OCI-LY7 (cell line): ENCODE measurements at regions of chr18 and their contacts with region 1.

Region 1: DNA sequence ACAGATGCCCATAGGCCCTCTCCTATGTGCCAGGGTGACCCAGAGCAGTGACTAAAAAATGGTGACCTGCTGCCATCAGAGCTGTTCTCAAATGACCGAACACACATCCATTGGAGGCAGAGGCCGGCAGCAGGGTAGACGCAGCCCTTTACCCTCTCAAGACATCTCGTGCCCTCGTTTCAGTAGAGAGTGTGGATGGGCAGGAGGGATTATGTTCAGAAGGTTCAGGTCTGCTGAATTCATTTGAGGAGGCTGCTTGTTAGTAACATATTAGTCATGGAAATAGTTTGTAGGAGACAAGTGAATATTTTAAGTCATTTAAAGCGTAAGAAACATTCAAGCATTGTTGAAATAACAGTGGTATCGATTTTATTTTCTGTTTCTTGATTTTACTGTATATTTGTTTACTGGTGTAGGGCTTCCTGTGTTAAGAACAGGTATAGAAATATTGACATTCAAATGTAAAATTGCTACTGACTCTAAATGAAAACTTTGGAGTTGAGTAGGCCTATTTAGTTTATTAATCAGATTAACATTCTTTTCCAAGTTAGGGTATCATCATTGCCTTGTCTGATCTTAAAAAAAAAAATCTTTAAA is 82.6 kb downstream of the ZNF532 start:
- DNase-seq: no peak
- H3K4me3 ChIP-seq: peak overlapping the region; percentile 42
- H3K27ac ChIP-seq: peak overlapping the region; percentile 99
- H3K4me1 ChIP-seq: peaks cover 70% of the 10 kb centered on the region
- CTCF ChIP-seq: no peak

Region 2: DNA sequence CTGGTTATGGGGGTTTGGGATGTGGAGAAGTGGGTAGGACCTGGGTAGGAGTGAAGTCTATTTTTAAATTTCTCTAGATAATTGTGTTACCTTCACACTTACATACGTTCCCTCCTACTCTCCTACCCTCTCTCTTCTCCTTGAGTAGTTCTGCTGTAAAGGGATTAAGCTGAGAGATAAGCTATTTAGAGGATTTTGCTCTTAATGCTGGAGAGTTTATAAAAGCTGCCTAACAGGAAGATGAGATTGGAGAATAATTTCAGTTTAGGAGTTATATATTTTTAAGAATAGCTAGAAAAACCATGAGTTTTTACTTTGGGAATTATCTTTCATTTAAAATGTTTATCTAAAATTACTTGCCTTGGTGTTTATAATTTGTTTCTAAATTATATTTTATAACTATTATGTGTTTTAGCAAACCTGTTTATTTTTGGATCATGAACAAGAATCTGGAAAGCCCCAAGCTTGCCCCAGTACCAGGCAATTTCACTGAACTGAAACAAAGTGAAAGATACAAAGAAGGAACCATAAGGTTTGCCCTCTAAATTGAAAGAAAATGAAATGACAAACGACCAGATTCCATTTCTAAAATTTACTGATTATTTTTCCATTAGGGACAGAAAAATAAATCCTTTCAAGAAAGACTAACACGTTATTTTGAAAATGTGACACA is 18.9 kb after region 1 on chr18:
- CTCF ChIA-PET with region 1: no interaction called
- POLR2A ChIA-PET with region 1: interaction called, 8 read pairs
- intact Hi-C with region 1: loop called (anchors 1 kb)
- DNase-seq: peak; percentile 24
- H3K4me3 ChIP-seq: peak overlapping the region; percentile 54
- H3K27ac ChIP-seq: peak overlapping the region; percentile 83
- H3K4me1 ChIP-seq: peaks cover 64% of the 10 kb centered on the region
- CTCF ChIP-seq: no peak

Region 3: DNA sequence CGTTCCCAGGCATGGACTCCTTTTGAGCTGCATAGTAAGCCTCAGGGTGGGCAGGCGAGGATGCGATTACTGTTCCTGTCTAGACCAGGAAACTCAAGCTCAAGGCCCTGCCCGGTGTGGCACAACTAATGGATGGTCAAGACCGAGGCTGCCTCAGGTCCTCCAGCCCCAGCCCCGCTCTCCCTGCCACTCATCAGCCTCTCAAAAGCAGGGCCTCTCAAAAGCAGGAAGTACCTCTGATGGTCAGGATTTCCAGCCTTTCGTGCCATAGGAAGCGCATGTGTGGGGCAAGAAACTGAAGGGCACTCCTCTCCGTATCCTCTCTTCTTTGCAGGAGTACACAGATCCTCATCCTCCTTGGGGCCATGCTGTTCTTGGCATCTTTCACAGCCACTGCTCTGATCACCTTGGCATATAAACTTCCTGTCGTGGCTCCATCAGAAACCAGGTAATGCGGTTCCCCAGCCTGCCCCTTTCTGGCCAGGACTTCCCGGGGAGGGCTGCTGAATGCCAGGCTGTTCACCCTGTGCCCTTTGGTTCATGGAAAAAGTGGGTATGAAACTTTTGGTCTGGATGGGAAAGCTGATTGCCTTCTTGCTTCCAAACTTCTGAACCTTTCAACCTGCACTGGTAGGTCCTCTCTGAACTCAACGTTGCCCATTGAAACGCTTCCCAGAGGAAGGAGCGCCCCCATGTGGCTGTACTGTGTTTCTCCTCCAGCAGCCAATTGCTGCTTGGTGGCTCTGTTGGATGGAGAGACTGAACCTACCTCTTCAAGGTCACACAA is 109.7 kb after region 1 on chr18:
- CTCF ChIA-PET with region 1: no interaction called
- POLR2A ChIA-PET with region 1: no interaction called
- intact Hi-C with region 1: loop called (anchors 5 kb)
- DNase-seq: peak; percentile 73
- H3K4me3 ChIP-seq: no peak overlapping the region
- H3K27ac ChIP-seq: no peak overlapping the region
- H3K4me1 ChIP-seq: no peaks in the 10 kb centered on the region
- CTCF ChIP-seq: peak; percentile 81